Esophagus muscularis mucosa (tissue), 4 donors: ENCODE measurements at regions of chr7 and their contacts with region 1.

Region 1: DNA sequence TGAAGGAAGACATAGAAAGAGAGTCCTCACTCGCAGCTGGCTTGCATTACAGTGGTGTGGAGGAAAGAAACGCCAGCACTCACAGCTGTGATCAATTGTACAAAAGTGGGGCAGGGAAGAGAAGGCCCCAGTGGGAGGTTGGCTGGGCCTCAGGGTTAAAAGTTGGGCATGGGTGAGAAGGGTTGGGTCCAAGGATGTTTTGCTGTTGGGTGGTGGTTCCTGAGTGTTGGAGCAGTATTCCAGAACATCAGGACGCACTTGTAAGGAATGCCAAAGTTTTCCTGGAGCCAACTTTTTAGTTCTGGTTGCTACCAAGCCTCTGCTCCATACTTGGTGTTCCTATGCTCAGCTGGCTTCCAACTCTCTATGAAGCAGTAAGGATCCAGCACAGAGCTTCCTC is 55.4 kb upstream of the MKRN1 start:
- DNase-seq: no peak
- H3K4me3 ChIP-seq: no peak overlapping the region
- H3K27ac ChIP-seq: peak overlapping the region; percentile 86 to 94 (median 92)
- H3K4me1 ChIP-seq: peaks cover 15 to 81% (median 78%) of the 10 kb centered on the region in 4 donors
- H3K27me3 ChIP-seq: no peaks in the 10 kb centered on the region
- CTCF ChIP-seq: no peak
- EP300 ChIP-seq: no peak
- POLR2A ChIP-seq: no peak

Region 2: GRCh38 chr7:140625908-140626868 is 91.4 kb after region 1 on chr7:
- intact Hi-C with region 1: loop called (anchors 5 kb)
- DNase-seq: peak; percentile 97
- H3K4me3 ChIP-seq: peak overlapping the region in 1 of 4 donors; percentile 2
- H3K27ac ChIP-seq: peak overlapping the region; percentile 80 to 98 (median 84)
- H3K4me1 ChIP-seq: peaks cover 38 to 95% (median 90%) of the 10 kb centered on the region in 4 donors
- H3K27me3 ChIP-seq: no peaks in the 10 kb centered on the region
- CTCF ChIP-seq: no peak
- EP300 ChIP-seq: no peak
- POLR2A ChIP-seq: no peak